T-cell (primary cell): ENCODE measurements at regions of chr1 and their contacts with region 1.

Region 1: DNA sequence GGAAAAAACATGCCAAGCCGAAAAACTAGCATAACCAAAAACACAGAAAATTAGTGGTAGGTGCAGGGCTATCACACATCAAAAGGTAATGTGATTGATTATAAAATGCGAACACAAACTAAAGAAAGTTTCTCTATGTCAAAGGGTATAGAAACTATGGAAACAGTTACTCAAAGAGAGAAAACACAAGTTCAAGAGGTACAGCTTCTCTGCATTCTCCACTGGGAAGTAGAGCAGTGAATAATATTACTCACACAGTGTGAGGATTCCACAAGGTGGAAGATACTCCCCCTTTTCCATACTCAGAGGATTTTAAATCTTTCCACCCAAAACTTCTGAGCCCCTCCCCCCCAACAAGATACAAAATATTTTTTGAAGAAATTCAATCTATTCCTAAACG is 18.6 kb downstream of the AKT3 start:
- DNase-seq: no peak
- ATAC-seq: no peak
- H3K4me3 ChIP-seq: no peak overlapping the region
- H3K4me3 Mint-ChIP-seq: no peak overlapping the region
- H3K27ac ChIP-seq: no peak overlapping the region
- H3K27ac Mint-ChIP-seq: peak overlapping the region in 1 of 2 donors; percentile 59
- H3K4me1 ChIP-seq: no peaks in the 10 kb centered on the region
- H3K4me1 Mint-ChIP-seq: peaks cover 52 to 61% (median 54%) of the 10 kb centered on the region in 3 donors
- H3K27me3 ChIP-seq: no peaks in the 10 kb centered on the region
- H3K27me3 Mint-ChIP-seq: no peaks in the 10 kb centered on the region

Region 2: GRCh38 chr1:243325305-243325890 is 506.1 kb before region 1 on chr1:
- CTCF ChIA-PET with region 1: no interaction called
- POLR2A ChIA-PET with region 1: interaction called in 1 of 2 experiments, 10 read pairs
- DNase-seq: peak in 9 of 35 experiments; percentile 2 to 72 (median 10)
- ATAC-seq: no peak
- H3K4me3 ChIP-seq: no peak overlapping the region
- H3K4me3 Mint-ChIP-seq: no peak overlapping the region
- H3K27ac ChIP-seq: no peak overlapping the region
- H3K27ac Mint-ChIP-seq: no peak overlapping the region
- H3K4me1 ChIP-seq: no peaks in the 10 kb centered on the region
- H3K4me1 Mint-ChIP-seq: no peaks in the 10 kb centered on the region
- H3K27me3 ChIP-seq: no peaks in the 10 kb centered on the region
- H3K27me3 Mint-ChIP-seq: no peaks in the 10 kb centered on the region

Region 3: DNA sequence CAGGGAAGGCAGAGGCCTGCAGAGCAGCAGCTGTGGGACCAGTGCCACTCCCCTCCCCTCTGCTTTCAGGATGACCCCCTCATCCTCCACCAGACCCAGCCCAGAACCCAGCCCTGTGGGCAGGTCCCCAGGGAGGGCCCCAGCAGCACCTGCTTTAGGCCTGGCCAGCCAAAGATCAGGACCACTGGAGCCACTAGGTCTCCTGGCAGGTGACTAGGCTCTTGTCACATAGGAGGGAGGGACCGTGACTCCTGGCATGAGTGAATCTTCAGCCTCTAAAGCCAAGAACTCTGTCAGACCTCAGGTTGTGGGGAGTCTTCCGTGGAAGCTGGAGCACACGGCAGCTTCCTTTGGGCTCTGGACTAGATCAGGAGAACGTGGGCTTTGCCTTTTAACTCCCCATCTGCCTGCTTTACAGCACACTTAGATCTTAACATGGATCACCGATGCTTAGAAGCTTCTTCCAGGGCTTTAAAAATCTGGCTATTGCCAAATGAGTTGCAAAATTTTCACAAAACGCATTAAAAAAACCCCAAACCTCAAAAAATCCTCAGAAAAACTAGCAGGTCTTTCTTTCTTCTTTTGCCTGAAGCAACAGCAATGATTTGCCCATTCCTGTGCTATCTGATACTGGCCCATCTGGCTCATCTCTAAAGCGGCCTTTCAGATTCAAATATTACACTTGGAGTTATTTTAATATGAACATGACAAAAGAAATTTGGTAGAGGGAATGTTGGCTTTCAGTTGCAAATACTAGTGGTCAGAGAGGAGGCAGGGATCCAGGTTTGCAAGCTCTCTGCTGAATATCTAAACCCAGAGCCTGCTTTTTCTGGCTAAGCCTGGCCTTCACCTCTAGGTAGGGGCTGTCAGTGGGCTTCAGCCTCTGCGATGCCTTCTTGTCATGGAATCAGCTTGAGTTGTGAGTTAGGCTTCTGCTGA is 340.4 kb before region 1 on chr1:
- CTCF ChIA-PET with region 1: no interaction called
- POLR2A ChIA-PET with region 1: no interaction called
- DNase-seq: no peak
- ATAC-seq: no peak
- H3K4me3 ChIP-seq: no peak overlapping the region
- H3K4me3 Mint-ChIP-seq: no peak overlapping the region
- H3K27ac ChIP-seq: no peak overlapping the region
- H3K27ac Mint-ChIP-seq: no peak overlapping the region
- H3K4me1 ChIP-seq: no peaks in the 10 kb centered on the region
- H3K4me1 Mint-ChIP-seq: peaks cover 0 to 2% (median 0%) of the 10 kb centered on the region in 3 donors
- H3K27me3 ChIP-seq: no peaks in the 10 kb centered on the region
- H3K27me3 Mint-ChIP-seq: no peaks in the 10 kb centered on the region

Region 4: DNA sequence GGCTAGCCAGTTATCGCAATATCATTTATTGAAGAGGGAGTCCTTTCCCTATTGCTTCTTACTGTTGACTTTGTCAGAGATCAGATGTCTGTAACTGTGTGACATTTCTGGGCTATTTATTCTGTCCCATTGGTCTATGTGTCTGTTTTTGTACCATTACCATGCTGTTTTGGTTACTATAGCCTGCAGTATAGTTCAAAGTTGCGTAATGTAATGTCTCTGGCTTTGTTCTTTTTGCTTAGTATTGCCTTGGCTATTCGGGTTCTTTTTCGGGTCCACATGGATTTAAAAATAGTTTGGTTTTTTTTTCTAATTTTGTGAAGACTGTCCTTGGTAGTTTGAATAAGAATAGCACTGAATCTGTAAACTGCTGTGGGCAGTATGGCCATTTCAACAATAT is 302.0 kb before region 1 on chr1:
- CTCF ChIA-PET with region 1: no interaction called
- POLR2A ChIA-PET with region 1: interaction called in 1 of 2 experiments, 10 read pairs
- DNase-seq: no peak
- ATAC-seq: no peak
- H3K4me3 ChIP-seq: no peak overlapping the region
- H3K4me3 Mint-ChIP-seq: no peak overlapping the region
- H3K27ac ChIP-seq: no peak overlapping the region
- H3K27ac Mint-ChIP-seq: no peak overlapping the region
- H3K4me1 ChIP-seq: no peaks in the 10 kb centered on the region
- H3K4me1 Mint-ChIP-seq: peaks cover 10 to 13% (median 11%) of the 10 kb centered on the region in 3 donors
- H3K27me3 ChIP-seq: no peaks in the 10 kb centered on the region
- H3K27me3 Mint-ChIP-seq: no peaks in the 10 kb centered on the region

Region 5: DNA sequence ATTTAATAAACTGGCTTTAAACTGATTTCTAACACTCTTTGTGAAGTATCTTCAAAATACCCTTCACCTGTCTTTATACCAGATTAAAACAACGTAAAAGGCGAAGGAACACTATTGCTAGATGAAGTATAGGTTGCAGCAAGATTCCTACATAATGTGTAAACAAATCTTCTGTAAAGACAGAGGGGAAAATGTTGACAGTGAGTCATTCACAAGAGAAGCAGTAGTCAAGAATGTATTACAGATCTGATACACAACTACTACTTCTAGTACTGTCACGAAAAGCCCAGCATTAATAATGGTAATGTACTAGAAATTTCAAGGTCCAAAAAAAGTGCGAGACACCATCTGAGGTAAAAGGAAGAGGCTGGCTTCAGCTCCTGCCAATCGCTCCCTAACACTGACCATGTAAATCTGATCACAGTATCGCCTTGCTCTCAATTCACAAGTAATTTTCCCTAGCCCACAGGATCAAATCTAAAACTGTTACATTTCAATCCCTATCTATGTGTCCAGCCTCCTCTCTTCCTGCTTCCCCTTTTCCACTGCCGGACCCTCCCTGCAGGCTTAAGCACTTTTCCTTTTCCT is 271.8 kb before region 1 on chr1:
- CTCF ChIA-PET with region 1: no interaction called
- POLR2A ChIA-PET with region 1: no interaction called
- DNase-seq: no peak
- ATAC-seq: no peak
- H3K4me3 ChIP-seq: no peak overlapping the region
- H3K4me3 Mint-ChIP-seq: no peak overlapping the region
- H3K27ac ChIP-seq: no peak overlapping the region
- H3K27ac Mint-ChIP-seq: no peak overlapping the region
- H3K4me1 ChIP-seq: no peaks in the 10 kb centered on the region
- H3K4me1 Mint-ChIP-seq: peaks cover 0 to 4% (median 4%) of the 10 kb centered on the region in 3 donors
- H3K27me3 ChIP-seq: no peaks in the 10 kb centered on the region
- H3K27me3 Mint-ChIP-seq: no peaks in the 10 kb centered on the region

Region 6: DNA sequence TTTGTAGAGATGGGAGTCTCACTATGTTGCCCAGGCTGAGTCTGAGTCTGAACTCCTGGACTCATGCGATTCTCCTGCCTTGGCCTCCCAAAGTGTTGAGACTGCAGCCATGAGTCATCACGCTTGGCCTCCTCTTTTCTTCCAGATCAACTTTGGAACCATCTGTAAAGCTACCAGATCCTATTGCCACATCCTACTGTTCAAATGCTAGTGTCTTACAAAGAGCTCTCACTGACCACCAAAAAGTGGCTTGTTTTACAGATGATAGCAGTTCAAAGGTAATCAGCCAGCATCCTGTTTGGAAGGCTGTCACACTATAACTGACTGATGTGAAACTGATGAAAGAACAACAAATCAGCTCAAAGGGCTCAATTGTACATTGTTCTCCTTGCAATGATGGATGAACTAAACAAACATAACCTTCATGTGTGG is 203.0 kb before region 1 on chr1:
- CTCF ChIA-PET with region 1: no interaction called
- POLR2A ChIA-PET with region 1: no interaction called
- DNase-seq: no peak
- ATAC-seq: no peak
- H3K4me3 ChIP-seq: no peak overlapping the region
- H3K4me3 Mint-ChIP-seq: no peak overlapping the region
- H3K27ac ChIP-seq: no peak overlapping the region
- H3K27ac Mint-ChIP-seq: no peak overlapping the region
- H3K4me1 ChIP-seq: no peaks in the 10 kb centered on the region
- H3K4me1 Mint-ChIP-seq: peaks cover 0 to 2% (median under 1%) of the 10 kb centered on the region in 3 donors
- H3K27me3 ChIP-seq: no peaks in the 10 kb centered on the region
- H3K27me3 Mint-ChIP-seq: no peaks in the 10 kb centered on the region

Region 7: GRCh38 chr1:243819438-243819839 is 12.0 kb before region 1 on chr1:
- CTCF ChIA-PET with region 1: no interaction called
- POLR2A ChIA-PET with region 1: no interaction called
- DNase-seq: no peak
- ATAC-seq: no peak
- H3K4me3 ChIP-seq: no peak overlapping the region
- H3K4me3 Mint-ChIP-seq: no peak overlapping the region
- H3K27ac ChIP-seq: no peak overlapping the region
- H3K27ac Mint-ChIP-seq: no peak overlapping the region
- H3K4me1 ChIP-seq: no peaks in the 10 kb centered on the region
- H3K4me1 Mint-ChIP-seq: peaks cover 31 to 43% (median 40%) of the 10 kb centered on the region in 3 donors
- H3K27me3 ChIP-seq: no peaks in the 10 kb centered on the region
- H3K27me3 Mint-ChIP-seq: no peaks in the 10 kb centered on the region